Lower leg skin (tissue), 4 donors: ENCODE measurements at regions of chr10 and their contacts with region 1.

Region 1: DNA sequence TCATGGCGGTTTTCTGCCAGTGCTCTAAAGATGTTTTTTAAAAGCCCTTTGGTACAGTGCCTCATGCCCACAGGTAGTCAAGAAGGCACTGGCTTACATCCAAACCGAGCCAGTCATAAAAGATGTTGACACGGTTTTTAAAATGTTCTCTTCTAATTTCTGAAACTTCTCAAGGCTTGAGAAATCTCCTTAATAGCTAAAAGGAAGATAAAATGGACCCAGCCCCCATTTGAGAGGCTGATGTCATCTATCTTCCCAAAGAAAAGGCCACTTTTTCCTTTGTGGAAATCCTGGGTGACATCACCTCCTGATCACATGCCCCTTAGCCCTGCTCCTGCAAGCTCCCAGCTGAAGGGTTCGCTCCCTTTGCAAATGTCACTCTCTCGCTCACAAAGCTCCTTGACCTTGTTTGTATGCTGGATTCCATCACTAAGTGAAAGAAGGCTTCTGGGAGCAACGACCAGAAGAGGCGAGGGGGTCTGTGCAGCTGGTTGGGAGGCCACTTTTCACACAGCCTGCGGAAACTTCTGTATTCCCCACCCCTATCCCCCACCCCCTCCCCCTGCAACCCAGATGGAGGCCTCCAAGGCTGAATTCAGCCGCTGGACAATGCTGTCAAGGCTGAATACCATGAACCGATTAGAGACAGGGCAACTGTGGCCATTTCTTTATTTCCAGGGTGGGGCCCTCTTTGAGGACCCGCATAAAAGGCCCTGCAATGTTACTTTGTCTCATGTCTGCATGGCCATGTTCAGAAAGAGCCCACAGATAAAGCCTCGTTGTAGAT is 122.8 kb downstream of the CUBN start:
- DNase-seq: no peak
- H3K4me3 ChIP-seq: no peak overlapping the region
- CTCF ChIP-seq: no peak
- POLR2A ChIP-seq: no peak

Region 2: DNA sequence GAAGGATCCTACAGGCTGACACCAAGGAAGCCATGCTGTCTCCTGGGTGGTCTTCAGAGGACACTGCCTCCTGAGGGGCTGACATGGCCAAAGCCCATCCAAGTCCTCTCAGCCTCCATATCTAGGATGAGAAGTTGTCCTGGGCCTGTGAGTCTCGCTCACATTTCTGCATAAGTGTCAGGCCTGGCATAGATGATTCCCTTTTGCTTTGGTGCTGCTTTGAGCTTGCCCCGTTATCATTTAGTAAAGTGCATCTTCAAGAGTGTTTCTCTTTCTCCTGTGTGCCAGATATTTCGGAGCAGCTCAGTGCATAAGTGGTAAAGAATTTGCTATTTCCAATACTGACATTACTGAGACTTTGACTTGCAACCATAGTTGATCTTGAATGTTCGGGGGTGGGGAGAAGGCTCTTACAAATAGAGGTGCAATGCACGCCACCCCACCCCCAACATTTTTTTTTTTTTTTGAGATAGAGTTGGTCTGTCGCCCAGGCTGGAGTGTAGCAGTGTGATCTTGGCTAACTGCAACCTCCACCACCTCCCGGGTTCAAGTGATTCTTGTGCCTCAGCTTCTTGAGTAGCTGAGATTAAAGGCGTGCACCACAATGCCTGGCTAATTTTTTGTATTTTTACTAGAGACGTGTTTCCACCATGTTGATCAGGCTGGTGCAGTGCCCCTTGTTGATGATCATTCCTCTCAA is 560.9 kb before region 1 on chr10:
- intact Hi-C with region 1: no loop called
- DNase-seq: no peak
- H3K4me3 ChIP-seq: no peak overlapping the region
- CTCF ChIP-seq: no peak
- POLR2A ChIP-seq: no peak

Region 3: DNA sequence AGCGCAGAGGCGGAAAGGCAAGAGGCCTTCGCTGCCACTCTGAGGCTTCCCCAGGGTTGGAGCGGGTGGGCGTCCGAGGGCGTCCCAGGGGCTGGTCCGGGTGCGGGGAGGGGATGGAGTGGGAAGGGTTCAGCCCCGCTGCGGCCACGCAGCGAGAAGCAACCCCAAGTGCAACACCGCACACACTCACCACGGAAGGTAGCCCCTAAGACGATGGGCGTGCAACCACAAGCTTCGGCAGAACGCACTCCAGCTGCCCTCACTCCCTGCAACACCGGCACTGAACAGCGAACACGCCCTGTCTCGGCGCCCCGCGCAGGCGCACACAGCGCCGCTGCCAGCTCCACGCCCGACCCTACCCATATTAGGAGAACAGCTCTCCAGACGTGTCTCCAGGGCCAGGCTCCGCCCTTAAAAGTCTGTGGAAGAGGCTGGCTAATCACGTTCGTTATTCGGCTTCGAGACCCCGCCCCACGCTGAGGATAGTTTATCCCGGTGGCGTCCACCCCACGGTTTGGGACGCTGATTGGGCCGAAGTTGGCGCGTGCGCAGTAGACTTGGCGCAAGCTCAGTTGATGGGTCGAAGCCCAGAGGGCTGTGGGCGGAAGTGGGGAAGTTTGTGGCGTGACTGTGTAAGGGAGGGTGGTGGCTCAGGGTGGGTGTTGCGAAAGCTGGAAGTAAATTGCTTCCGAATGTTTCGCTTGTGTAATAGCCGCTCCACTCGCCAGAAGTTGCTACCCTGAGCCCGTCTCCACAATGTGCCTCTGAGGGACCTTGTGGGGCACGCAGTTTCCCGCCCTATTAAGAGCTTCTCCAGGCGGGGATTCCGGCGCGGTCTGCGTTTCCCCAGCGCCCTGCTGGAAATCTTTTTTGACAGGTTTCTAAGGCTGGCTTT is 189.5 kb before region 1 on chr10 and contains the start of gene RSU1:
- intact Hi-C with region 1: no loop called
- DNase-seq: peak; percentile 100
- H3K4me3 ChIP-seq: peak within 1 kb of the TSS; percentile 96
- CTCF ChIP-seq: no peak
- POLR2A ChIP-seq: peak in 1 of 2 donors; percentile 11
- total RNA-seq, gene RSU1: 28.7 to 50.9 (median 43.0) TPM

Region 4: GRCh38 chr10:17033529-17034260 is 26.9 kb after region 1 on chr10:
- intact Hi-C with region 1: loop called (anchors 2 kb)
- DNase-seq: no peak
- H3K4me3 ChIP-seq: no peak overlapping the region
- CTCF ChIP-seq: no peak
- POLR2A ChIP-seq: no peak